Activated CD4-positive, alpha-beta T cell treated with anti-CD3 and anti-CD28 coated beads, Interleukin-2, amount 10 ng/mL, durations not matched to agents 24 days and 14 days (primary cell): ENCODE measurements at regions of chr5 and their contacts with region 1.

Region 1: GRCh38 chr5:176388444-176389134 is at the starts of genes HIGD2A and NOP16:
- DNase-seq: peak; percentile 99
- H3K4me3 Mint-ChIP-seq: peak within 1 kb of the TSS; percentile 98
- H3K27ac Mint-ChIP-seq: peak within 1 kb of the TSS; percentile 100
- H3K4me1 Mint-ChIP-seq: peaks cover 25% of the 10 kb centered on the region
- H3K27me3 Mint-ChIP-seq: no peaks in the 10 kb centered on the region
- total RNA-seq, gene HIGD2A: 96.4 and 104 TPM in 2 replicates
- total RNA-seq, gene NOP16: 109 and 114 TPM in 2 replicates

Region 2: GRCh38 chr5:176361437-176362232 is 27.0 kb before region 1 on chr5 and contains the start of gene KIAA1191:
- intact Hi-C with region 1: loop called (anchors 1 kb)
- DNase-seq: peak; percentile 98
- H3K4me3 Mint-ChIP-seq: peak within 1 kb of the TSS; percentile 96
- H3K27ac Mint-ChIP-seq: peak within 1 kb of the TSS; percentile 93
- H3K4me1 Mint-ChIP-seq: peaks cover 21% of the 10 kb centered on the region
- H3K27me3 Mint-ChIP-seq: no peaks in the 10 kb centered on the region
- total RNA-seq, gene KIAA1191: 55.5 and 59.7 TPM in 2 replicates

Region 3: GRCh38 chr5:176447982-176448608 is 59.5 kb after region 1 on chr5 and contains the start of gene FAF2:
- intact Hi-C with region 1: loop called (anchors 1 kb)
- DNase-seq: peak; percentile 100
- H3K4me3 Mint-ChIP-seq: peak within 1 kb of the TSS; percentile 93
- H3K27ac Mint-ChIP-seq: peak within 1 kb of the TSS; percentile 94
- H3K4me1 Mint-ChIP-seq: peaks cover 30% of the 10 kb centered on the region
- H3K27me3 Mint-ChIP-seq: peaks cover 2% of the 10 kb centered on the region
- total RNA-seq, gene FAF2: 42.8 and 43.9 TPM in 2 replicates